Left ventricle myocardium inferior (tissue), 1 donor: ENCODE measurements at regions of chr7 and their contacts with region 1.

Region 1: DNA sequence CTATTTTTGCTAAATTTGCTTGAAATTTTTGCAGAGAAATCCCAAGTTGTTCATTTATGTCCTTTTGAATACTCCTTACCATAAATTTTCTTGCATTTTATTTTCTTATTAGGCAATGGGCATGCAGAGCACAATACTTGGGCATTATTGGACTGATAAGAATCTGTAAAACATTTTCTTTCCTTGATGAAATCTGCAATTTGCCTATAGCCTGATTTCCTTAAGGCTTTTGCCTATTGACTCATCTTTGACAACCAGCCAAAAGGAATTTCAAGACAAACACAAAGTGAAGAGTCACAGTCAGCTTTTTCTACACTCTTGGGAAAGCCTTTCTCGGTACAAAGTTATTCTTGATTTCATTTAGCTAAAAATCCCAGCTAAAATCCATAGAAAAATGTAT is 30.6 kb upstream of the GNAT3 start:
- DNase-seq: no peak
- H3K4me3 ChIP-seq: no peak overlapping the region
- H3K27ac ChIP-seq: peak overlapping the region; percentile 68
- H3K4me1 ChIP-seq: peaks cover 27% of the 10 kb centered on the region
- H3K27me3 ChIP-seq: no peaks in the 10 kb centered on the region
- CTCF ChIP-seq: no peak

Region 2: GRCh38 chr7:80499350-80499953 is 43.0 kb before region 1 on chr7:
- intact Hi-C with region 1: loop called (anchors 10 kb)
- DNase-seq: peak; percentile 22
- H3K4me3 ChIP-seq: no peak overlapping the region
- H3K27ac ChIP-seq: peak overlapping the region; percentile 84
- H3K4me1 ChIP-seq: peaks cover 44% of the 10 kb centered on the region
- H3K27me3 ChIP-seq: no peaks in the 10 kb centered on the region
- CTCF ChIP-seq: no peak

Region 3: GRCh38 chr7:80593869-80594582 is 51.6 kb after region 1 on chr7:
- intact Hi-C with region 1: loop called (anchors 10 kb)
- DNase-seq: peak; percentile 31
- H3K4me3 ChIP-seq: peak overlapping the region; percentile 4
- H3K27ac ChIP-seq: peak overlapping the region; percentile 85
- H3K4me1 ChIP-seq: peaks cover 87% of the 10 kb centered on the region
- H3K27me3 ChIP-seq: no peaks in the 10 kb centered on the region
- CTCF ChIP-seq: no peak

Region 4: DNA sequence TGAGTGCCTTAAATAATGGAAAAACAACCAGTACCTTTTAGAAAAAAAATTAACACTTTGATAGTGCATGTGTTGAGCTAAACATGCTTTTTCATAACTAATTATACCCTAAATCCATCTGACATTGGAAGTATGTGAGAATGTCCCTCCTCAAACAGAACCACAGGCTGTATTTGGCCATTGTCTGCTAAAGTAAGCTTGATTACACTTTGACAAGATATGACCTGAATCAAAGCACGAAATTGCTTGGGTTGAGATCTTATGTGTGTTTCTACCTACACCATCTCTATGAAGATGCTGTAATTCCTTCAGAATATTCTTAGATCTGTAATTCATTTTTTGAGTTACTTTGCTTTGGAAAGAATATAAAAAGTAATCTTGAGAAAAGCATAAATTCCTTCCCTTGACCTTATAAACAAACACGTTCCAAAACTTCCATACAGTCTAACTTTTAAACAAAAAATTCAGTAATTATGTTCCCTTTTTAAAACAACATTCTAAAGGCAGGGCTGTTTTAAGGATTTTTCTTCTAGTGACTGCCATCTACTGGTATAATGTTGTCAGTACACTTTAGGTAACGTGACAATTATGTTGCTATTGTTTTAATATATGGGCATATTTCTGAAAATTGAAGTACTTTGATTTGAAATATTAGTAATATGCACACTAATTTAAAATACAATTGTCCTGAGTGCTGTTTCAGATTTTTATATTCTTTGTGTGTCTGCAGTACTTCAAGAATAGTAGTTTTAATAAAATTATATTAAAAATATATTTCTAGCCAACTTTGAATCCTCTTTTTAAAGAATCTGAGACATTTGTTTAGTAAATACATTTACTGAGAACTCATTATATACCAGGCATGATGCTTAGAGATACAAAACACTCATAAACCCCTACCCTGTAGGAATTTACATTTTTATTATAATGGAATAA is 117.0 kb after region 1 on chr7:
- intact Hi-C with region 1: loop called (anchors 10 kb)
- DNase-seq: no peak
- H3K4me3 ChIP-seq: peak overlapping the region; percentile 28
- H3K27ac ChIP-seq: peak overlapping the region; percentile 76
- H3K4me1 ChIP-seq: peaks cover 98% of the 10 kb centered on the region
- H3K27me3 ChIP-seq: no peaks in the 10 kb centered on the region
- CTCF ChIP-seq: peak; percentile 80